PC-9 (cell line): ENCODE measurements at regions of chr22 and their contacts with region 1.

Region 1: DNA sequence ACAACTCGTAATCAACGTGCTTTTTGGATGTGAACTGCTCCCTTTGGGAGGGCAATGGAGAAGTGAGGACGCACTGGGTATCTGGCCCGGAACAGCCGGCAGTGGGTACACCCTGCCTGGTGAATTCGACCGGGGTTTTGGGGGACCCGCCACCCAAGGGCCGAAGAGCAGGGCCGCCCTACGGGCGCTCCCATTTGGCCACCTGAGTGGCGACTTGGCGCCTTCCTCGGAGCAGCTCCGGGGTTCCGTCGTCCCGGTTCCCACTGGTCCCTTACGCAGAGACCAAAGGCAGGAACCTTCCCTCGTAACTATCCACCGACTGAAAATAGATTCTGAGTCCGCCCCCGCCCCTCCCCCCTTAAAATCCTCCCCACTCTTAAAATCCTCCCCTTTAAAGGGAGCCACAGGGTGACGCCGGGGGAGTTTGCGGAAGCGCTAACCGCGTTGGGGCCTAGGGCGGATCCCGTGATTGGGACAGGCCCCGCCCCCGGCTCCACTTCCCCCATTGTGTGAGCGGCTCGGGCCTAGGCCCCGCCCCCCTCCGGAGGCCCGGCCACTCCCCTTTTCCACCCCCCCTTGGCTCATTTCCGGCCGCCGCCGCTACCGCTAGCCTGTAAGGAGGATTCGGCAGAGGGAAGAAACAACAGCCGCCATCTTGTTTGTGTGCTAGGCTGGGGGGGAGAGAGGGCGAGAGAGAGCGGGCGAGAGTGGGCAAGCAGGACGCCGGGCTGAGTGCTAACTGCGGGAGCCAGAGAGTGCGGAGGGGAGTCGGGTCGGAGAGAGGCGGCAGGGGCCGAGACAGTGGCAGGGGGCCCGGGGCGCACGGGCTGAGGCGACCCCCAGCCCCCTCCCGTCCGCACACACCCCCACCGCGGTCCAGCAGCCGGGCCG is 1.0 kb upstream of the EP300 start:
- DNase-seq: peak; percentile 93 to 98
- H3K4me3 ChIP-seq: peak overlapping the region; percentile 92
- H3K27ac ChIP-seq: peak overlapping the region; percentile 97
- H3K4me1 ChIP-seq: peaks cover 28% of the 10 kb centered on the region
- H3K27me3 ChIP-seq: no peaks in the 10 kb centered on the region
- CTCF ChIP-seq: no peak

Region 2: GRCh38 chr22:40782518-40782917 is 308.9 kb before region 1 on chr22:
- CTCF ChIA-PET with region 1: no interaction called
- POLR2A ChIA-PET with region 1: interaction called, 19 read pairs
- intact Hi-C with region 1: no loop called
- DNase-seq: peak; percentile 23 to 89
- H3K4me3 ChIP-seq: no peak overlapping the region; the same call in 1 of the 2 replicates
- H3K27ac ChIP-seq: peak overlapping the region; percentile 63
- H3K4me1 ChIP-seq: peaks cover 37% of the 10 kb centered on the region
- H3K27me3 ChIP-seq: no peaks in the 10 kb centered on the region
- CTCF ChIP-seq: no peak

Region 3: GRCh38 chr22:41001722-41002122 is 89.7 kb before region 1 on chr22:
- CTCF ChIA-PET with region 1: no interaction called
- POLR2A ChIA-PET with region 1: interaction called, 5 read pairs
- intact Hi-C with region 1: loop called (anchors 1 kb)
- DNase-seq: peak; percentile 65 to 100
- H3K4me3 ChIP-seq: peak overlapping the region; percentile 45; the same call in 1 of the 2 replicates
- H3K27ac ChIP-seq: peak overlapping the region; percentile 96
- H3K4me1 ChIP-seq: peaks cover 44% of the 10 kb centered on the region
- H3K27me3 ChIP-seq: no peaks in the 10 kb centered on the region
- CTCF ChIP-seq: no peak

Region 4: GRCh38 chr22:41009202-41009943 is 82.0 kb before region 1 on chr22:
- CTCF ChIA-PET with region 1: no interaction called
- POLR2A ChIA-PET with region 1: interaction called, 11 read pairs
- intact Hi-C with region 1: no loop called
- DNase-seq: peak; percentile 51 to 77
- H3K4me3 ChIP-seq: no peak overlapping the region
- H3K27ac ChIP-seq: peak overlapping the region; percentile 44
- H3K4me1 ChIP-seq: peaks cover 18% of the 10 kb centered on the region
- H3K27me3 ChIP-seq: no peaks in the 10 kb centered on the region
- CTCF ChIP-seq: no peak

Region 5: GRCh38 chr22:41127451-41127850 is 36.1 kb after region 1 on chr22:
- CTCF ChIA-PET with region 1: no interaction called
- POLR2A ChIA-PET with region 1: interaction called, 11 read pairs
- intact Hi-C with region 1: no loop called
- DNase-seq: no peak
- H3K4me3 ChIP-seq: no peak overlapping the region
- H3K27ac ChIP-seq: no peak overlapping the region
- H3K4me1 ChIP-seq: no peaks in the 10 kb centered on the region
- H3K27me3 ChIP-seq: no peaks in the 10 kb centered on the region
- CTCF ChIP-seq: no peak